Motor neuron (in vitro differentiated cells): ENCODE measurements at regions of chr11 and their contacts with region 1.

Region 1: DNA sequence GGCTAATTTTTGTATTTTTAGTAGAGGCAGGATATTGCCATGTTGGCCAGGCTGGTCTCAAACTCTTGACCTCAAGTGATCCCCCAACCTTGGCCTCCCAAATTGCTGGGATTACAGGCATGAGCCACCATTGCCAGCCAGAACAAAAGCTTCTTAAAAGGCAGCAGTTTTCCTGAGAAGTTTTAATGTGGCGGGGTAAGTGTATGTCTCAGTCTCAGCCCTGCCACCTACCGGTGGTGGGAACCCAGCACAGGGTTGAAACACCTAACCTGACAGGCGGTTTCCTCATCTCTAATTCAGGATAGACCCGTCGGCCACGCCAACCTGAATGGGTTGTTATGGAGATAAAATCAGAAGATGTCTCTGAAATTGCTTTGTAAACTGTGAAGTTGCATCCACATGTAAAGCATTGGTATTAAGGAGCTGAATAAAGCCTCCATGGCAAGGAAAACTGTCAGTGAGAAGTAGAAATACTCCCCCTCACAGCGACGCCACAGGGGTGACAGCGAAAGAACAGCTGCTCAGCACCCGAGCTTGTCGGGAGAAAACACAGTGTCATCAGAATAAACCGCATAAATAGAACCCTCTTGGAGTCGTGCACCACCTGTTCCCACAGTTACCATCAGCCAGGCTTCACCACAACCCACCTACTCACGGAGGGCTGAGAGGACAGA is 165.9 kb upstream of the NCAM1 start:
- ATAC-seq: peak in 3 of 8 experiments; percentile 47 to 67 (median 58)
- H3K4me3 ChIP-seq: no peak overlapping the region
- H3K27ac ChIP-seq: peak overlapping the region; percentile 64 to 65
- H3K4me1 ChIP-seq: peaks cover 67 to 82% of the 10 kb centered on the region in 2 donors

Region 2: GRCh38 chr11:112440518-112440917 is 354.8 kb before region 1 on chr11:
- in situ Hi-C with region 1: loop called in 1 of 9 experiments (anchors 25 kb)
- ATAC-seq: peak in 3 of 8 experiments; percentile 46 to 59 (median 55)
- H3K4me3 ChIP-seq: no peak overlapping the region
- H3K27ac ChIP-seq: no peak overlapping the region
- H3K4me1 ChIP-seq: no peaks in the 10 kb centered on the region

Region 3: GRCh38 chr11:112613051-112613972 is 182.0 kb before region 1 on chr11:
- in situ Hi-C with region 1: loop called in 1 of 9 experiments (anchors 25 kb)
- ATAC-seq: peak; percentile 67 to 86 (median 77)
- H3K4me3 ChIP-seq: no peak overlapping the region
- H3K27ac ChIP-seq: peak overlapping the region; percentile 0 to 52
- H3K4me1 ChIP-seq: peaks cover 59 to 87% of the 10 kb centered on the region in 2 donors